Activated CD8-positive, alpha-beta T cell treated with anti-CD3 and anti-CD28 coated beads for 36 hours (primary cell): ENCODE measurements at regions of chr6 and their contacts with region 1.

Region 1: GRCh38 chr6:16761471-16762267 is 409 bp upstream of the ATXN1 start:
- DNase-seq: peak; percentile 91
- ATAC-seq: peak; percentile 64
- H3K4me3 Mint-ChIP-seq: peak overlapping the region; percentile 98
- H3K27ac Mint-ChIP-seq: peak overlapping the region; percentile 99
- H3K4me1 Mint-ChIP-seq: peaks cover 58% of the 10 kb centered on the region
- H3K27me3 Mint-ChIP-seq: no peaks in the 10 kb centered on the region
- CTCF ChIP-seq: no peak

Region 2: DNA sequence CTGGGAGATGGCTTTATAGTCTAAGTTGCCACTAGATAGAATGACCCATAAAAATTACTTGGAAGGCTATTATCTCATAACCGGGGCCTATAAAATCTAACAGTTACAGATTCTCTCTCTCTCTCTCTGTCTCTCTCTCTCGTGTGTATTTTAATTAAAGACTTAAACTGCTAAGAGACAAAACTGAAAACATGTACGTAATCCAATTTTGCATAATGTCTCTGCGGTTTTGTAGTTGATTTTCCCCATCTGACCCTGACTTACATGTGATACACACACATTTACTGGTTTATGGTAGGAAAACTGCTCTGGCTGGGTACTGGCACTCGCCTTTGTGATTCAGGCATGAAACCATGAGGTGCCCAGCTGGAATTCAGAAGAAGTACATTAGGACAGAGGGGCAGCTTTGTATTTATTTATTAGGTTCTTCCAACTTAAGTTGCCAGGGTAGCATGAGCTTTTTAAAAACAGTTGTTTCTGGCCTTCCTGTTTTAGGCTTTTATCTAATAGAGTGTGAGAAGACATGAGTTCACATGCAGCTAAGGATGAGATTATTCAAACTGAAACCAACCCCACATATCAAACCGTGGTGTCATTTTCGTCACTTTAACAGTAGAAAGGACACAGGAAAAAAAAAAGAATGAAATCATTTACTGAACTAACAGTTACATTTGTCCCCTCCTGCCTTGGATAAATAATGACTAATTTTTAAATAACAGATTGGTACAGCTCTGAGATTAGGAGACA is 340.8 kb before region 1 on chr6:
- CTCF ChIA-PET with region 1: interaction called, 4 read pairs
- POLR2A ChIA-PET with region 1: no interaction called
- intact Hi-C with region 1: loop called (anchors 5 kb)
- DNase-seq: peak; percentile 63
- ATAC-seq: peak; percentile 87
- H3K4me3 Mint-ChIP-seq: peak overlapping the region; percentile 25
- H3K27ac Mint-ChIP-seq: peak overlapping the region; percentile 96
- H3K4me1 Mint-ChIP-seq: peaks cover 41% of the 10 kb centered on the region
- H3K27me3 Mint-ChIP-seq: no peaks in the 10 kb centered on the region
- CTCF ChIP-seq: no peak

Region 3: GRCh38 chr6:16503970-16504415 is 257.7 kb before region 1 on chr6:
- CTCF ChIA-PET with region 1: interaction called, 10 read pairs
- POLR2A ChIA-PET with region 1: no interaction called
- intact Hi-C with region 1: no loop called
- DNase-seq: peak; percentile 49
- ATAC-seq: peak; percentile 88
- H3K4me3 Mint-ChIP-seq: no peak overlapping the region
- H3K27ac Mint-ChIP-seq: no peak overlapping the region
- H3K4me1 Mint-ChIP-seq: peaks cover 55% of the 10 kb centered on the region
- H3K27me3 Mint-ChIP-seq: no peaks in the 10 kb centered on the region
- CTCF ChIP-seq: no peak

Region 4: GRCh38 chr6:16651871-16652270 is 109.8 kb before region 1 on chr6:
- CTCF ChIA-PET with region 1: interaction called, 31 read pairs
- POLR2A ChIA-PET with region 1: interaction called, 41 read pairs
- intact Hi-C with region 1: no loop called
- DNase-seq: no peak
- ATAC-seq: peak; percentile 85
- H3K4me3 Mint-ChIP-seq: no peak overlapping the region
- H3K27ac Mint-ChIP-seq: peak overlapping the region; percentile 4
- H3K4me1 Mint-ChIP-seq: peaks cover 50% of the 10 kb centered on the region
- H3K27me3 Mint-ChIP-seq: no peaks in the 10 kb centered on the region
- CTCF ChIP-seq: no peak

Region 5: GRCh38 chr6:16700202-16700915 is 61.3 kb before region 1 on chr6:
- CTCF ChIA-PET with region 1: interaction called, 58 read pairs
- POLR2A ChIA-PET with region 1: interaction called, 43 read pairs
- intact Hi-C with region 1: no loop called
- DNase-seq: peak; percentile 75
- ATAC-seq: peak; percentile 17
- H3K4me3 Mint-ChIP-seq: peak overlapping the region; percentile 74
- H3K27ac Mint-ChIP-seq: peak overlapping the region; percentile 99
- H3K4me1 Mint-ChIP-seq: peaks cover 69% of the 10 kb centered on the region
- H3K27me3 Mint-ChIP-seq: no peaks in the 10 kb centered on the region
- CTCF ChIP-seq: no peak

Region 6: DNA sequence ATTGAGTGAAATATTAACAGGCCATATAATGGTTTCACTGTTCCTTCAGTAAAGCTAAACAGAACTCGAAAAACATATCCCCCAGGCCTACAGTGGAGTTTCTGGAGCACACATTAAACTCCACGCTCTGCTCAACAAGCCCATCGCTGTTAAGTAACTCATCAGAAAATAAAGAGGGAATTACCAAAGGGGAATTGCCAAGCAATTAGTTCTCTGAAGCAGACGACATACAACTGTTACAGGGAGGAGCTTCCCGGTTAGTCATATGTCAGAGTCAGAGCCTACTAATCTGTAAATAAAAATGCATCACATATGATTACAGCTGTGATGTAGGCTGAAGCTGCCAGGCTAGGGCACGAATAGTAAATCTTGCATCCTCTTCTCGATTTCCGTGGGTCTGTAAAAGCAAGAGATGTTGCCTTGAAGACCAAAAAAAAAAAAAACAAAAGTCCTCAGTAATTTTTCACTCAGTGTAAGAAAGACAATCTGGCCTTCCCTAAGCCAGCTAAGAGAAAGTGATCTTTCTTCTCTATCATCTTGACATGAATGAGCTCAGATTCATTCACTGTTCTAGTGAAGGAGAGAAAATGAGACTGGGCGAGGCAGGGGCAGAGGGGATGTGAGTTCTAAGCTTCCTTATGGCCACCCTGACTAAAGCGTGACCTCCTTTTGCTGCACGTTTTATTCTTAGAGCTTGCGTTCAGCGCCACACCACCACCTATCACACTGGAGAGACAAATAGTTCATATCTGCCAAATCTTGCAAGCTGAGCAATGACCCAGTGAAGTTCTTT is 14.2 kb before region 1 on chr6:
- CTCF ChIA-PET with region 1: interaction called, 17 read pairs
- POLR2A ChIA-PET with region 1: interaction called, 7 read pairs
- intact Hi-C with region 1: no loop called
- DNase-seq: no peak
- ATAC-seq: peak; percentile 76
- H3K4me3 Mint-ChIP-seq: no peak overlapping the region
- H3K27ac Mint-ChIP-seq: peak overlapping the region; percentile 30
- H3K4me1 Mint-ChIP-seq: peaks cover 59% of the 10 kb centered on the region
- H3K27me3 Mint-ChIP-seq: no peaks in the 10 kb centered on the region
- CTCF ChIP-seq: no peak

Region 7: DNA sequence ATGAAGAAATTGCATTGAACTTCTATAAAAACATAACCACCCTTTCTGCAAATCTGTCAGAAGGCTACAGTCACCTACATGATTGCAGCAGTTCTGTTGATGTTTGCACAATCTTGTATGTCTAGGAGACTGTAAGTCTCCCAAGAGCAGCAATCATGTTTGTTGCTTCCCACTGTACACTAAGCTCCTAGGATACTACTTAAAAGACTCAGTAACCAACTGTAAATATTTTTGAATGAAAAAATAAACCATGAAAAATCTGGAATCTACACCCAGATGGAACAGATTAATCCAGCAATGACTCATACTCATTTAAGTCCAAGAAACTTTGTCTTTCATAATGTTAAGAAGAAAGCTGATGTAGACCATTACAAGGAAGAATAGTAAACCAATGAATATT is 168.1 kb after region 1 on chr6:
- CTCF ChIA-PET with region 1: no interaction called
- POLR2A ChIA-PET with region 1: no interaction called
- intact Hi-C with region 1: no loop called
- DNase-seq: no peak
- ATAC-seq: no peak
- H3K4me3 Mint-ChIP-seq: no peak overlapping the region
- H3K27ac Mint-ChIP-seq: no peak overlapping the region
- H3K4me1 Mint-ChIP-seq: peaks cover 2% of the 10 kb centered on the region
- H3K27me3 Mint-ChIP-seq: peaks cover 26% of the 10 kb centered on the region
- CTCF ChIP-seq: no peak